CD8-positive, alpha-beta memory T cell (primary cell): ENCODE measurements at regions of chr9 and their contacts with region 1.

Region 1: GRCh38 chr9:35116898-35117551 is 1.4 kb upstream of the ATOSB start:
- DNase-seq: peak; percentile 82 to 92 (median 83)
- H3K4me3 ChIP-seq: peak overlapping the region; percentile 61
- H3K4me3 Mint-ChIP-seq: peak overlapping the region; percentile 86 to 97 (median 89)
- H3K27ac ChIP-seq: peak overlapping the region; percentile 82
- H3K27ac Mint-ChIP-seq: peak overlapping the region; percentile 92 to 100 (median 96)
- H3K4me1 ChIP-seq: peaks cover 33% of the 10 kb centered on the region
- H3K4me1 Mint-ChIP-seq: peaks cover 38 to 45% (median 42%) of the 10 kb centered on the region in 3 donors
- H3K27me3 ChIP-seq: no peaks in the 10 kb centered on the region
- H3K27me3 Mint-ChIP-seq: peaks cover 0 to 1% of the 10 kb centered on the region in 2 donors

Region 2: GRCh38 chr9:35057271-35057620 is 59.8 kb before region 1 on chr9:
- CTCF ChIA-PET with region 1: no interaction called
- POLR2A ChIA-PET with region 1: no interaction called
- DNase-seq: no peak
- H3K4me3 ChIP-seq: no peak overlapping the region
- H3K4me3 Mint-ChIP-seq: no peak overlapping the region
- H3K27ac ChIP-seq: no peak overlapping the region
- H3K27ac Mint-ChIP-seq: peak overlapping the region in 1 of 8 donors; percentile 53
- H3K4me1 ChIP-seq: no peaks in the 10 kb centered on the region
- H3K4me1 Mint-ChIP-seq: peaks cover 0 to 7% (median 0%) of the 10 kb centered on the region in 3 donors
- H3K27me3 ChIP-seq: no peaks in the 10 kb centered on the region
- H3K27me3 Mint-ChIP-seq: no peaks in the 10 kb centered on the region

Region 3: DNA sequence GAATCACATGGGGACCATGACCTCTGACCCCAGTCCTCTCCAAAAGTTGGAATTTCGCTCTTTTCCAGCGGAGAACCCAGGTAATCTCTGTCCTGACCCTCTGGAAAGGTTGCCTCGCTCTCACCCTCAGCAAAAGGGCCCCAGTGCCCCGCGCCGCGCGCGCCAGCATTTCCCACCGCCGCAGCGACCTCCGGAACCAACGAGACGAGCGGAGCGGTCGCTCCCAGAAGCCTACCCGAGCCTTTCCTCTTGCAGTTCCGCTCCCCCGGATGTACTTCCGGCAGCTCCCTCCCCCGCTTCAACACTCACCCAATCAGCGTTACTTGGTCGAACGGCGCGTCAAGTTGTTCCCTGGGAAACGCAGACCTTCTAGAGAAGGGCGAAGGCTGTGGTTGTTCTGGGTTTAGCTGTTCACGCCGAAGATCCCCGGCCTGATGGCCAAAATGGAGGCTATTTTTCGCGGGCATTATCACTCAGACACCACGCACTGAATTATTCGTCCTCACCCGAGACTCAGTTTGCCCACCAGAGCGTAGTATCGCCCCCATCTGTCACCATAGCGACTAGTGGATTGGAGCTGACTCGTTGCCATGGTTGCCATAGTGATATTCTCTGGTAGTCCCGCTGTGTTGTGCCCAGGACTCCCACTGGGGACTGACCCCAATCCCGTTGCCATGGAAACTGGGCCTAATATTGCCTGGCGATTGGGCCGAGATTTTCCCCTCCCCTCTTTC is 13.9 kb before region 1 on chr9 and contains the start of gene STOML2:
- CTCF ChIA-PET with region 1: interaction called, 50 read pairs
- POLR2A ChIA-PET with region 1: interaction called, 8 read pairs
- DNase-seq: peak; percentile 85 to 95 (median 91)
- H3K4me3 ChIP-seq: peak within 1 kb of the TSS; percentile 80
- H3K4me3 Mint-ChIP-seq: peak within 1 kb of the TSS; percentile 84 to 98 (median 90)
- H3K27ac ChIP-seq: peak within 1 kb of the TSS; percentile 86
- H3K27ac Mint-ChIP-seq: peak within 1 kb of the TSS; percentile 80 to 100 (median 99)
- H3K4me1 ChIP-seq: peaks cover 15% of the 10 kb centered on the region
- H3K4me1 Mint-ChIP-seq: peaks cover 27 to 35% (median 33%) of the 10 kb centered on the region in 3 donors
- H3K27me3 ChIP-seq: no peaks in the 10 kb centered on the region
- H3K27me3 Mint-ChIP-seq: peaks cover 0 to 2% of the 10 kb centered on the region in 2 donors
- total RNA-seq, gene STOML2: 258 to 271 TPM

Region 4: DNA sequence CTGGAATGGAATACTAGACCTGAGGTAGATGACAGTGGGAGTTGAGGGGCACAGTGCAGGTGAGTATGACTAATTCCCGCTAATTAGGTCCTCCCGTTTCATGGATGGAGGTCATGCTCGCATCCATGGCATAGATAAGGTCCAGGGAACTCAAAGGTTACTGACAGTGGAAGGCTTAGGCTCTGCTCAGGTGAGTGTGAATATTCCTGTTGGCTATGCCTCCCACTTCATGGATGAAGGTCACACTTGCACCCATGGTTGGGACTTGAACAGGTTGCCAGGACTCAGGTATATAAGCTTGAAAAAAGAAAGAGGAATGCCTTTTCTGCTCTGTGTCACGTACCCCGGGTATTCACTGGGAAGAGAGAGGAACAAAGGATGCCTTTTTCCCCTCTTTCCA is 25.0 kb after region 1 on chr9:
- CTCF ChIA-PET with region 1: no interaction called
- POLR2A ChIA-PET with region 1: no interaction called
- DNase-seq: no peak
- H3K4me3 ChIP-seq: no peak overlapping the region
- H3K4me3 Mint-ChIP-seq: no peak overlapping the region
- H3K27ac ChIP-seq: no peak overlapping the region
- H3K27ac Mint-ChIP-seq: no peak overlapping the region
- H3K4me1 ChIP-seq: no peaks in the 10 kb centered on the region
- H3K4me1 Mint-ChIP-seq: no peaks in the 10 kb centered on the region
- H3K27me3 ChIP-seq: no peaks in the 10 kb centered on the region
- H3K27me3 Mint-ChIP-seq: peaks cover 5 to 9% of the 10 kb centered on the region in 2 donors

Region 5: DNA sequence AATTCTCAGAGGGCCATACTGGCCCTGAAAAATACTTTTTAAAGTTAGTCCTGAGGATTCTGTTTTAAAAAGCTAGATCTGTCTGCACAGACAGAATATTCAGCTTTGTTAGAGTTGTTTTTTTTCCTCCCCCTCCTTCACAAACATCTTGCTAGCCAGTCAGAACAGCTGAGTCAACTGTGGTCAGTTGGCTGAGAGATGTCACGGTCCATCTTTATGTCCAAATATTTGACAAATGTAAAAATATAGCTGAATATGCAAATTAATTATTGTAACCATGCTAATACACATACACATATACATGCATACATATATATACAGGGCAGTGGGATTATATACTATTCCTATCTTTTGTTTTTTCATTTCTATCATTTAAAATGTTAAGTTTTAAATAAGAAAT is 78.7 kb after region 1 on chr9:
- CTCF ChIA-PET with region 1: no interaction called
- POLR2A ChIA-PET with region 1: no interaction called
- DNase-seq: no peak
- H3K4me3 ChIP-seq: no peak overlapping the region
- H3K4me3 Mint-ChIP-seq: no peak overlapping the region
- H3K27ac ChIP-seq: no peak overlapping the region
- H3K27ac Mint-ChIP-seq: no peak overlapping the region
- H3K4me1 ChIP-seq: no peaks in the 10 kb centered on the region
- H3K4me1 Mint-ChIP-seq: no peaks in the 10 kb centered on the region
- H3K27me3 ChIP-seq: no peaks in the 10 kb centered on the region
- H3K27me3 Mint-ChIP-seq: peaks cover 3 to 21% of the 10 kb centered on the region in 2 donors

Region 6: GRCh38 chr9:35476596-35476995 is 359.6 kb after region 1 on chr9:
- CTCF ChIA-PET with region 1: interaction called, 13 read pairs
- POLR2A ChIA-PET with region 1: no interaction called
- DNase-seq: no peak
- H3K4me3 ChIP-seq: no peak overlapping the region
- H3K4me3 Mint-ChIP-seq: no peak overlapping the region
- H3K27ac ChIP-seq: no peak overlapping the region
- H3K27ac Mint-ChIP-seq: no peak overlapping the region
- H3K4me1 ChIP-seq: no peaks in the 10 kb centered on the region
- H3K4me1 Mint-ChIP-seq: no peaks in the 10 kb centered on the region
- H3K27me3 ChIP-seq: peaks cover 4% of the 10 kb centered on the region
- H3K27me3 Mint-ChIP-seq: peaks cover 5 to 31% of the 10 kb centered on the region in 2 donors